ENCODE measurements at regions of chr11 and their contacts with region 1.

Region 1: GRCh38 chr11:128624269-128625175 is 37.2 kb upstream of the ETS1 start:
- DNase-seq: no peak
- H3K4me3 ChIP-seq: no peak overlapping the region
- H3K27ac ChIP-seq: no peak overlapping the region
- H3K4me1 ChIP-seq: no peaks in the 10 kb centered on the region
- H3K27me3 ChIP-seq: no peaks in the 10 kb centered on the region
- CTCF ChIP-seq: no peak
- EP300 ChIP-seq: no peak
- POLR2A ChIP-seq: no peak

Region 2: DNA sequence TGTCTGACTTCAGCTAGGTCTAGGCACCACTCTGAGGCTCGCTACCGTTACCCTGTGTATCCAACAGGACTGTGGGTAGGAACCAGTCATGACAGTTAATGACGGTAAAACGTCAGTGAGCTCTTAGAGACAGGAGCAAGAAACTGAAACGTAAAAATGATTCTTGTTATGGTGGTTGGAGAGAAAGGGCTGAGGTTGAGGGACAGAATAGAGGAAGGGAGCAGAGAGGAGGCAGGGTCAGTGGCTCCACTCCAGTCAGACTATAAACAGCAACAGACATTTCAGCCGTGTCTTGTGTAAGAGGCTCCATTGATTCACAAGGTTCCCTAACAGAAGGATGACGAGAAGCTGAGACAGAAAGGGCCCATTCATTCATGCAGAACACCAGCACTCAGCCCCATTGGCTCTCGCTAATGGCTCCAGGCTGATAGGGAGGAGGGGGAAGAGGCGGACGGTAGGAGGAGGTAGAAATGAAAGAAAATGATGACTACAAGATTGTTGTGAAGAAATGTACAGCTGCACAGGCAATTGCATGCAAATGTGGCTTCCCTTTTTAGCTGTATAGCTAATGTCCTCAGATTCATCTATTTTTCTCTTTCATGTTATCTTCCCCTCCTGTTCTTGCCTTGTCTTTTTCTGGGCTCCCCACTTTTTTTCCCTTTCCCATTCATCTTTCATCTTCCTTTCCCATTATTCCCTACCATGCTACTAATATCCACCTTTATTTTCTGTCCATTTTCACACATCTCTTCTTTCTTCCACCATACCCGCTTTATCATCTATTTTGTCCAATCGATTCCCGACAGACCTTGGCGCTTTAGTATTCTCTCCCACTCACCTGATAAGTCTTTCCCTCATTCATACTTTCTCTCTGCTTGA is 71.5 kb before region 1 on chr11:
- intact Hi-C with region 1: loop called in 1 of 4 experiments (anchors 10 kb)
- DNase-seq: no peak
- H3K4me3 ChIP-seq: no peak overlapping the region
- H3K27ac ChIP-seq: no peak overlapping the region
- H3K4me1 ChIP-seq: peaks cover 8% of the 10 kb centered on the region
- H3K27me3 ChIP-seq: no peaks in the 10 kb centered on the region
- CTCF ChIP-seq: no peak
- EP300 ChIP-seq: no peak
- POLR2A ChIP-seq: no peak

Region 3: DNA sequence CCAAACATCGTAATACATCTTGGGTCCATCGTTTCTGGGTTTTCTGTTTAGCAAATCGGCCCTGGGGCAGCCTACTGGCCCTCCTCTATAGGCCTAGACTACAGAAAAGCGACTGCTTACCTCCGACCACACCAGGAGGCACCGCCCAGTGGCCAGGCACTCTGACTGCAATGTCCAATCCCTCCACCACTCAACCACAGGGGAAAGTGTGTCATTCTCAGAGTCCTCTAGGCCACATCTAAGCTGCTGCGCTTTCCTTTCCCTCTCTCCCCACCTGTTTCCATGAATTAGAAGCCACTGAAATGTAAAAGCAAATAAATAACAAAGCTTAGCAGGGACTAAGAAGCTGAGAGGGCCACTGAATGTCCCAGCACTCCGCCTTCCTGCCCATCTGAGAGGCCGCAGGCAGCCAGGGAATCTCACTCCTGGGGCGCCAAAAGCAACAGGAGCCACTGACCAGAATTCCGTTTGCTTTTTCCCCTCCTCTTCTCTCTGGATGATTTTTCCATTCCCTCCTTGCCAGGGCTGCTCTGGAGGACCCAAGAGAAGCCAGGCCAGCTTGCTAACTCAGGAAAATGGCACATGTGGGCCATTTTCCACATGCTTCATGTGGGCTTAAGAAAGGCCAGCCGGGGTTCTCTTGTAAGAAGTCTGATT is 19.3 kb after region 1 on chr11:
- intact Hi-C with region 1: no loop called
- DNase-seq: no peak
- H3K4me3 ChIP-seq: no peak overlapping the region
- H3K27ac ChIP-seq: no peak overlapping the region
- H3K4me1 ChIP-seq: no peaks in the 10 kb centered on the region
- H3K27me3 ChIP-seq: no peaks in the 10 kb centered on the region
- CTCF ChIP-seq: no peak
- EP300 ChIP-seq: no peak
- POLR2A ChIP-seq: no peak

Region 4: GRCh38 chr11:128956401-128957201 is 332.1 kb after region 1 on chr11:
- intact Hi-C with region 1: loop called in 1 of 4 experiments (anchors 10 kb)
- DNase-seq: peak in 1 of 5 donors; percentile 29
- H3K4me3 ChIP-seq: no peak overlapping the region
- H3K27ac ChIP-seq: no peak overlapping the region
- H3K4me1 ChIP-seq: no peaks in the 10 kb centered on the region
- H3K27me3 ChIP-seq: no peaks in the 10 kb centered on the region
- CTCF ChIP-seq: peak; percentile 39 to 74 (median 64)
- EP300 ChIP-seq: no peak
- POLR2A ChIP-seq: no peak